ENCODE measurements at regions of chr17 and their contacts with region 1.

Region 1: GRCh38 chr17:12034538-12034937 is 13.9 kb downstream of the MAP2K4 start:
- DNase-seq: no peak
- ATAC-seq: peak in 1 of 8 donors; percentile 18
- H3K4me3 ChIP-seq: no peak overlapping the region
- H3K27ac ChIP-seq: no peak overlapping the region
- H3K4me1 ChIP-seq: peaks cover 0 to 46% (median 18%) of the 10 kb centered on the region in 9 donors
- H3K27me3 ChIP-seq: no peaks in the 10 kb centered on the region
- CTCF ChIP-seq: no peak

Region 2: DNA sequence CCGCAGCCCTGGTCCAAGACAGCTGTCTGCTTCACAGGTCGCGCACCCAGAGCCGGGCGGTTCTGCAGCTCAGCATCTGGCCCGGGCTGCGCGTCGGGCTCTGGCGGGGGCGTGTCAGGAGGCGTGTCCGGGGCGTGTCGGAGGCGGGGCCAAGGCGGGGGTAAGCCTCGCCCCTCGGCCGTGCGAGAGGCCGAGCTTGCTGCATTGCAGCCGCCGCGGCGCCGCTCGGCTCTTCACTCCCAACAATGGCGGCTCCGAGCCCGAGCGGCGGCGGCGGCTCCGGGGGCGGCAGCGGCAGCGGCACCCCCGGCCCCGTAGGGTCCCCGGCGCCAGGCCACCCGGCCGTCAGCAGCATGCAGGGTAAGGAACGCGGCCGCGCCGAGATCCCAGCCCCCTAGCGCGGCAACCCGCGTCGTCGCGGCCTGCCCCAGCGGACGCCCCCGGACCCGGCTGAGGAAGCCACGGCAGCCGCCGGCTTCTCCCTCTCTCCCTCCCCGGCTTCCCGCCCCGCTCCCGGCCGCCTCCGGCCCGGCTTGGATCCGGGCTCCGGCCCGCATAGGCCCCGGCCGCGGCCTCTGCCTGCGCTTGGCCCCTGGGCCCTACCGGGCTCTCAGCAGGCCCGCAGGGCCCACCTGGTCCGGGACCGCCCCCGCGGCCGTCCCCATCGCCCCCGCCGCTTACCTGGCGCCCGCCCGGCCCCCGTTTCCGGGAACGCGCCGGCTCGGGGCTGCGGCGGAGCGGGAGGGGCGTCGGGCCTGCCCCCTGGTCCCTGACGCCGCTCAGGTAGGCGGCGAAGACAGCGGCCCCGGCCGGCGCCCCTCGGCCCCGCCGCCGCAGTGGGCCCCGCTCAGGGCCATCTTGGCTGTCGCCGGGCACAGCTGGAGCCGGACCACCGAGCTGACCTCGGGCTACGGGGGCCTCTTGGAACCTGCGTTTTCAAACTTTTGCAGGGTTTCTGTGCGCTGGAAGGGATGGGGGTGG is 13.6 kb before region 1 on chr17 and contains the start of gene MAP2K4:
- intact Hi-C with region 1: loop called in 1 of 10 experiments (anchors 1 kb)
- DNase-seq: peak; percentile 93 to 96
- ATAC-seq: peak; percentile 100
- H3K4me3 ChIP-seq: peak within 1 kb of the TSS; percentile 67 to 97 (median 83)
- H3K27ac ChIP-seq: peak within 1 kb of the TSS; percentile 83 to 95 (median 93)
- H3K4me1 ChIP-seq: peaks cover 5 to 48% (median 33%) of the 10 kb centered on the region in 9 donors
- H3K27me3 ChIP-seq: no peaks in the 10 kb centered on the region
- CTCF ChIP-seq: no peak
- total RNA-seq, gene MAP2K4: 24.0 to 42.7 (median 33.4) TPM